B cell (primary cell): ENCODE measurements at regions of chr1 and their contacts with region 1.

Region 1: GRCh38 chr1:35797380-35797779 is 10.4 kb upstream of the AGO4 start:
- DNase-seq: no peak
- ATAC-seq: no peak
- H3K4me3 ChIP-seq: peak overlapping the region in 2 of 5 experiments; percentile 32 to 51
- H3K4me3 Mint-ChIP-seq: peak overlapping the region; percentile 33
- H3K27ac ChIP-seq: peak overlapping the region; percentile 1 to 27
- H3K27ac Mint-ChIP-seq: peak overlapping the region; percentile 57
- H3K4me1 ChIP-seq: peaks cover 27% of the 10 kb centered on the region in 2 donors
- H3K4me1 Mint-ChIP-seq: peaks cover 29% of the 10 kb centered on the region
- H3K27me3 ChIP-seq: no peaks in the 10 kb centered on the region
- H3K27me3 Mint-ChIP-seq: no peaks in the 10 kb centered on the region
- CTCF ChIP-seq: no peak

Region 2: DNA sequence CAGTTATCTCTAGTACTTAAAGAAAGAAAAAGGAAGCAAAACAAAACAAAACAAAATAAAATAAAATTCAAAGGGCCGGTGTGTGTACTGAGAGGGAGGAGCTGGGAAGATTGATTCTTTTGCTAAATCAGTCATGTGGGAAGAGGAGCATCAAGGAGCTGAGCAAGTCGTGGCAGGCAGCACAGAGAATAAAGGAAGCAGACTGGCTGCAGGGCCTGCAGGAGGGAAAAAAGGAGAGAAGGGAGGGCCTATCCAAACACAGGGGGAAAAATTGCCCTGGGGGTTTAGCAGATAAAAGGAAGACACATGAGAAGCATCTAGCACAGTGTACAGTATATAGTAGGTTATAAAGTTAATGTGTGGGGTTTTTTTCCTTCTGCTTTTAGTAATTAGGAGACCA is 38.0 kb after region 1 on chr1:
- CTCF ChIA-PET with region 1: no interaction called
- POLR2A ChIA-PET with region 1: interaction called, 14 read pairs
- intact Hi-C with region 1: no loop called
- DNase-seq: no peak
- ATAC-seq: no peak
- H3K4me3 ChIP-seq: no peak overlapping the region
- H3K4me3 Mint-ChIP-seq: no peak overlapping the region
- H3K27ac ChIP-seq: no peak overlapping the region
- H3K27ac Mint-ChIP-seq: no peak overlapping the region
- H3K4me1 ChIP-seq: no peaks in the 10 kb centered on the region
- H3K4me1 Mint-ChIP-seq: no peaks in the 10 kb centered on the region
- H3K27me3 ChIP-seq: no peaks in the 10 kb centered on the region
- H3K27me3 Mint-ChIP-seq: no peaks in the 10 kb centered on the region
- CTCF ChIP-seq: no peak